ENCODE measurements at regions of chr7 and their contacts with region 1.

Region 1: GRCh38 chr7:68748934-68749900 is 849.1 kb upstream of the AUTS2 start:
- DNase-seq: no peak
- H3K4me3 ChIP-seq: no peak overlapping the region
- H3K27ac ChIP-seq: no peak overlapping the region
- H3K4me1 ChIP-seq: no peaks in the 10 kb centered on the region
- H3K27me3 ChIP-seq: no peaks in the 10 kb centered on the region
- CTCF ChIP-seq: no peak

Region 2: DNA sequence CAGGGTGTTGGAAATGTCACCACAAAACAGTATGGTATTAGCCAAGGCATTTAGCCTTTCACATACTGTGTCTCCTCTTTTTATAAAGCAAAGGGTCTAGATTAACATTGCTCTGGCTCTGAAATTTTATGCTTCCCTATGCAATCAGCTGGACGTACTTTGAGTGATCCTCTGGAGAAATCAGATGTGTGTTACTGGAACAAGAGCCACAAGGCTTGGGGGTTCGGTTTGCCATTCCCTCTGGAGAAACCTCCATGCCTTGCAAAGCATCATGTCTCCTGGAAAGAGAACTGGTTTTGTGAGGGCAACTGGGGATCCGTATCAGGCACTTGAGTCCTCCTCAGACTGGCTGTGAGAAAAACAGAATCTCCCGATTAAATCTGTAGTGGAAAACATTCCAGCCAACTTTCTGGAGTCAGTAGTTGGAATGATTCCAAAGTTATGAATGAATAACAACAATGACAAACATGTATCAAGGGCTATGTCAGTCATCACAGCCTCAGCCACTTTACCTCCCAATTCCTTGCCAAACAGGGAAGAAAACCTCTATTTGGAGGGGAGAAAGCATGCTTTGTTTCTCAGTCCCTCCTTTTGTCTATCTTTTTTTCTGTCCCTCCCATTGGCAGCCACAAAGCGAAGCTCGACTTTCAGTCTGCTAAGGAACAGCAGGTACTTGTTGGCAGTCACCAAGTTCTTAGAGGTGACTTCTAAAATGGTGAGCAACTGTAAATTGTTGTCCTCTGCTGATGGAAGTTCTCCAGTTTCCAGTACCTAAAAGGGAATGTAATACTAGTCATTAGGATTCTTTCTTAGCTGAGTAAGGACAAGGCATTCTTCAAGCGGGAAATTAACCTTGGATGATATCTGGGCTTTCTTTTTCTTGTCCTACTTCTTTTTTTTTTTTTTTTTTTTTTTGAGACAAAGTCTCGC is 15.7 kb before region 1 on chr7:
- CTCF ChIA-PET with region 1: no interaction called
- POLR2A ChIA-PET with region 1: no interaction called
- intact Hi-C with region 1: no loop called
- DNase-seq: peak in 1 of 2 experiments; percentile 46
- H3K4me3 ChIP-seq: no peak overlapping the region
- H3K27ac ChIP-seq: no peak overlapping the region
- H3K4me1 ChIP-seq: peaks cover 46% of the 10 kb centered on the region
- H3K27me3 ChIP-seq: 0 out of 2 replicates have a peak, but pooled peaks cover 4% of the 10 kb centered on the region
- CTCF ChIP-seq: no peak

Region 3: DNA sequence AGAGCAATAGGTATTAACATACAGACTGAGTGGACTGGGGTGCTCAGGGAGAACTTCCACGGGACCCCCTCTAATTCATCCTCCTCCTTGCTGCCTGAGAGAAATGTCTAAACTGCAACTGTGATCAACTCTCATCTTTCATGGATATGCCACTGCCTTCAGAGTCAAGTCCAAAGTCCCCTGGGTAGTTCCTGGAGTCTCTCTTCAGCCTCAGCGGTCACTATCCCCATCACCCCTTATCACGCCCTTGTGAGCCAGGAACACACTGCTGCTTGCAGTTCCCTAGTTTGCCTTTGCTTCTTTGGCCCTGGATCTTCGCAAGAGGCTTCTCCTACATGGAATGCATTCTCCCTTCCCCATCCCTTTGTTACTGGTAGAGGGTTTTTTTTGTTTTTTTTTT is 790.3 kb after region 1 on chr7:
- CTCF ChIA-PET with region 1: no interaction called
- POLR2A ChIA-PET with region 1: no interaction called
- intact Hi-C with region 1: no loop called
- DNase-seq: no peak
- H3K4me3 ChIP-seq: no peak overlapping the region
- H3K27ac ChIP-seq: no peak overlapping the region
- H3K4me1 ChIP-seq: no peaks in the 10 kb centered on the region
- H3K27me3 ChIP-seq: no peaks in the 10 kb centered on the region
- CTCF ChIP-seq: no peak

Region 4: DNA sequence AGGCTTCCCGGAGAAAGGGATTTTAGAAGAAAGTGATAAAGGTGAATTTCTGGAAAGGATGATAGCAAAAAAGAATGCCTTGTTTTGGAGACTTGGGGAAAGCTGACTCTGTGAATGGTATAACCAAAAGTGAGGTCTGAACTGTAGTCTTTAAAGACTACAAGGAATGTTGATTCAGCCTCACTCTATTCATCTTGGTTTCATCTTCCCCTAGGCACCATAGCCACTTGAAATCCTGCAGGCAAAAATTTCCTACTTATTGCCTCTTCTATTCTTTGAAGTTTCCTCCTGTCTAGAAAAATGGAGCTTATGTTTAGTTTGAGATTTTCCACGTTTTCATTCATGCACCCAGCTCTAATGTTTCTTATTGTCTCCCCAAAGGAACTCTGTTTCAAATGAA is 1367.0 kb after region 1 on chr7:
- CTCF ChIA-PET with region 1: interaction called, 10 read pairs
- POLR2A ChIA-PET with region 1: no interaction called
- intact Hi-C with region 1: no loop called
- DNase-seq: no peak
- H3K4me3 ChIP-seq: no peak overlapping the region
- H3K27ac ChIP-seq: no peak overlapping the region
- H3K4me1 ChIP-seq: no peaks in the 10 kb centered on the region
- H3K27me3 ChIP-seq: peaks cover 4% of the 10 kb centered on the region; the same call in 1 of the 2 replicates
- CTCF ChIP-seq: no peak